ENCODE measurements at regions of chr1 and their contacts with region 1.

Region 1: GRCh38 chr1:240189386-240189989 is 97.8 kb downstream of the FMN2 start:
- DNase-seq: peak in 1 of 2 donors; percentile 22
- ATAC-seq: peak; percentile 48

Region 2: DNA sequence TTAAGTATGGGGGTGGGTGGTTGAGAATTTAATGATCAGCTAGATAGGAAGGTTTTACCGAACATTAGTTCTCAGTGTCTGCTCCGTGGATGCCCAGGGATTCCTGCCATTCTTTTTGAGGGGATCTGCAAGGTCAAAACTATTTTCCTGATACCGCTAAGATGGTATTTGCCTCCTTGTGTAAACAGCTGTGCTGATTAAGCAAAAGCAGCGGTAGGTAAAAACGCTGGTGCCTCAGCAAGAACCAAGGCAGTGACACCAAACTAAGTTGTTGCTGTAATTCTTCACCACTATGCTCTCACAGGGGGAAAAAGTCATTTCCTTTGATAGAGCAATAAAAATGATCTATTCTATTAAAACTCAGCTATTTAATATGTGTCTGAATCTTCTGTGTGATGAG is 131.2 kb after region 1 on chr1:
- intact Hi-C with region 1: no loop called
- DNase-seq: no peak
- ATAC-seq: no peak

Region 3: GRCh38 chr1:240611619-240612480 is 422.4 kb after region 1 on chr1 and contains the start of gene GREM2:
- intact Hi-C with region 1: loop called in 1 of 2 experiments (anchors 5 kb)
- DNase-seq: peak; percentile 48 to 68
- ATAC-seq: peak; percentile 80
- total RNA-seq, gene GREM2: 2.5 to 10.0 TPM

Region 4: DNA sequence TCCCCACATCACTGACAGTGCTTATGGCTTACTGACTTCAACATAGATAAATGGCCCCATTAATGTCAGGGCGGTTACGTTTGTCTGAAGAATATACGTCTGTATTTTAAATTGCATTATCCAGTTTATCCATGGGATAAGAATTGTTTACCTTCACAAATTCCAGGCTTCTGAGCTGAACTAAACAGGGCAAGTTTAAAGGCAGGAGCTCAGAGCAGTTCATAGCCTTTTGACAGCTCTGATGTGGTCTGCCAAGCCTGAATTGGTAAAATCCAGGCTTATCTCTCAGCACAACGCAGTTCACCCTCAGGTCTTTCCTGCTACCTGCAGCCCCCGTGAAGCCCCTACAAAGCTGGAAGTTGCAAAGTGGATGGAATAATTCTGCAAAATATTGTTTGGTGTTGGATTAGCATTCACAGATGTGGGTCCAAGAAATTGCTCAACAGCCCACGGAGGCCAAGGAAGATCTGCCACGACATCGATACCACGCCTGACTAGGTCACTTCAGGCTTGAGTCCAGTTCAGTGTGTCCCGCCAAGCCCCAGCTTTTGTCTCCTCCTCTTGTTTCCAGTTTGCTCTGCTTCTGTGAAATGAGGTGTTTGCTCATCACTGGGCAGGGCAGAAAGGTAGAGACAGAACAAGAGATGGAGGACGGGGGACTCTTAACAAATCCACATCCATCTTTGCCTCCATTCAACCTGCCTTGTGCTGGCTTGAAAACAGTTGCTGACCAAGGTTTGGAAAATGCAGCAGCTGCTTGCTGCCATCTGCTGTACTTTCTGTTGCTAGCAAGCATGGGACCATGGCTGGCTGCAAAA is 502.2 kb after region 1 on chr1:
- intact Hi-C with region 1: loop called in 1 of 2 experiments (anchors 5 kb)
- DNase-seq: peak; percentile 11 to 26
- ATAC-seq: peak; percentile 66

Measured in left colon (tissue), 2 donors.